K562 (cell line): ENCODE measurements at regions of chr5 and their contacts with region 1.

Region 1: DNA sequence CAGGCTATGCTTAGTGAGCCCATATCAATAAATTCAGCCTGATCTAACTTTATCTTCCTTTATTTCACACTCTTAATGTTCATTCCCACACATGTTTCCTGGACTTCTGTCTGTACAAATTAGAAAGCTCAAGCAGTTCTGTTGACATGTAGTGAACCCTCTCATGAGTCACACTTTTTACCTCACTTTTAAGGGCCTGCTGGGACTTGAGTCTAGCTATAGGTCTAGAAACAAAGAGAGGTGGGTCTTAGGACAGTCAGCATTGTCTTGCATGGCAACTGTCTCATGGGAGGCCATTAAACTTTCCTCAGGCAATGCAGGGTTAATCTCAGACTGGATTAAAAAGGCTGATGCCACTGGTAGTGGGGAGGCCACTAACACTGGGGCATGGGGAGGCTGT is 8.6 kb upstream of the CCNH start:
- DNase-seq: no peak
- ATAC-seq: no peak
- H3K4me3 ChIP-seq: no peak overlapping the region
- H3K27ac ChIP-seq: no peak overlapping the region
- H3K4me1 ChIP-seq: no peaks in the 10 kb centered on the region
- H3K27me3 ChIP-seq: no peaks in the 10 kb centered on the region; a peak in 1 of 5 replicates
- CTCF ChIP-seq: no peak
- EP300 ChIP-seq: no peak
- POLR2A ChIP-seq: no peak
- RAD21 ChIP-seq: no peak

Region 2: GRCh38 chr5:87770601-87771121 is 349.4 kb after region 1 on chr5:
- CTCF ChIA-PET with region 1: no interaction called
- POLR2A ChIA-PET with region 1: no interaction called
- in situ Hi-C with region 1: no loop called
- intact Hi-C with region 1: loop called (anchors 10 kb)
- DNase-seq: no peak
- ATAC-seq: no peak
- H3K4me3 ChIP-seq: no peak overlapping the region
- H3K27ac ChIP-seq: no peak overlapping the region
- H3K4me1 ChIP-seq: no peaks in the 10 kb centered on the region
- H3K27me3 ChIP-seq: no peaks in the 10 kb centered on the region
- CTCF ChIP-seq: no peak
- EP300 ChIP-seq: no peak
- POLR2A ChIP-seq: no peak
- RAD21 ChIP-seq: no peak